ENCODE measurements at regions of chr9 and their contacts with region 1.

Region 1: GRCh38 chr9:114348906-114349482 is 19.3 kb downstream of the ORM2 start:
- DNase-seq: peak; percentile 77
- ATAC-seq: peak; percentile 94
- H3K4me3 Mint-ChIP-seq: peak overlapping the region; percentile 58
- H3K27ac Mint-ChIP-seq: peak overlapping the region; percentile 94
- H3K4me1 Mint-ChIP-seq: peaks cover 44% of the 10 kb centered on the region
- H3K27me3 Mint-ChIP-seq: no peaks in the 10 kb centered on the region
- CTCF ChIP-seq: no peak

Region 2: GRCh38 chr9:114366334-114367128 is 17.5 kb after region 1 on chr9:
- CTCF ChIA-PET with region 1: interaction called, 3 read pairs
- POLR2A ChIA-PET with region 1: interaction called, 26 read pairs
- intact Hi-C with region 1: loop called (anchors 1 kb)
- DNase-seq: no peak
- ATAC-seq: peak; percentile 41
- H3K4me3 Mint-ChIP-seq: peak overlapping the region; percentile 69
- H3K27ac Mint-ChIP-seq: peak overlapping the region; percentile 91
- H3K4me1 Mint-ChIP-seq: peaks cover 90% of the 10 kb centered on the region
- H3K27me3 Mint-ChIP-seq: no peaks in the 10 kb centered on the region
- CTCF ChIP-seq: no peak

Region 3: GRCh38 chr9:114616653-114617520 is 267.9 kb after region 1 on chr9:
- CTCF ChIA-PET with region 1: no interaction called
- POLR2A ChIA-PET with region 1: interaction called, 3 read pairs
- intact Hi-C with region 1: loop called (anchors 2 kb)
- DNase-seq: peak; percentile 73
- ATAC-seq: peak; percentile 76
- H3K4me3 Mint-ChIP-seq: peak overlapping the region; percentile 74
- H3K27ac Mint-ChIP-seq: peak overlapping the region; percentile 98
- H3K4me1 Mint-ChIP-seq: peaks cover 83% of the 10 kb centered on the region
- H3K27me3 Mint-ChIP-seq: no peaks in the 10 kb centered on the region
- CTCF ChIP-seq: no peak

Region 4: GRCh38 chr9:114718801-114719221 is 369.8 kb after region 1 on chr9:
- CTCF ChIA-PET with region 1: no interaction called
- POLR2A ChIA-PET with region 1: no interaction called
- intact Hi-C with region 1: no loop called
- DNase-seq: no peak
- ATAC-seq: peak; percentile 42
- H3K4me3 Mint-ChIP-seq: no peak overlapping the region
- H3K27ac Mint-ChIP-seq: no peak overlapping the region
- H3K4me1 Mint-ChIP-seq: peaks cover 6% of the 10 kb centered on the region
- H3K27me3 Mint-ChIP-seq: peaks cover 27% of the 10 kb centered on the region
- CTCF ChIP-seq: no peak

Measured in activated B cell treated with CpG ODN at 0.5 μM for 24 hours (primary cell).